A673 (cell line): ENCODE measurements at regions of chr1 and their contacts with region 1.

Region 1: DNA sequence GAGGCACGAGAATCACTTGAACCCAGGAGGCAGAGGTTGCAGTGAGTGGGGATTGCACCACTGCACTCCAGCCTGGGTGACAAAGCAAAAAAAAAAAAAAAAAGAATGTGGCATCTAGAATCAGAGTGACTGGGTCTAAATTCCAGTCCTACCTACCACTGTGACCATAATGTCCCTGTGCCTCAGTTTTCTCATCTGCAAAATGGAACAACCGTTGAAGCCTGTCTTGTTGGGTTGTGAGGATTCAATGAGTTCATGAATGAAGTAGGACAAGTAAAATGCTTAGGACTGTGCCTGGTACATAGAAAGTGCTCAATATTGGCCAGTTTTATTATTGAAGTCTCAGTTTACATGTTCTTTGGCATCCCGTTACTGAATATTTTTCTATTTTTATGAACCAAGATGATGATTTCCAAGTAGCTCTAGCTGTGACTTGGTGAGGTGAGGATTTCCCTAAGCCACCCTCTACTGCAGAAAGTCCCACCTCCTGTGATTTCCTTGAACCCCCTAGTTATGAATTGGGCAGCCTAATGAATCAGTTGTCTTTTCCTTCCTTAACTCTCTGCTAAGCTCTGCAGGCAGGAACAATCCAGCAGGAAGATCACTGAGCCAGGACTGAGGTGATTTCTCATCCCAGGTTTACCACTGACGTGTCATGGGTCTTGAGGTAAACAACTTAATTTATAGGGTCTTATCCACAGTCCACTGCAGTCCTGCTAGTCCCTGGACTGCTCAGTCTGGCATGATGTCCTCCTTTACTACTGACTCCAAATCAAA is 18.9 kb upstream of the MEAF6 start:
- DNase-seq: no peak
- H3K4me3 ChIP-seq: no peak overlapping the region
- H3K27ac ChIP-seq: no peak overlapping the region
- H3K4me1 ChIP-seq: no peaks in the 10 kb centered on the region
- H3K27me3 ChIP-seq: no peaks in the 10 kb centered on the region
- CTCF ChIP-seq: no peak

Region 2: DNA sequence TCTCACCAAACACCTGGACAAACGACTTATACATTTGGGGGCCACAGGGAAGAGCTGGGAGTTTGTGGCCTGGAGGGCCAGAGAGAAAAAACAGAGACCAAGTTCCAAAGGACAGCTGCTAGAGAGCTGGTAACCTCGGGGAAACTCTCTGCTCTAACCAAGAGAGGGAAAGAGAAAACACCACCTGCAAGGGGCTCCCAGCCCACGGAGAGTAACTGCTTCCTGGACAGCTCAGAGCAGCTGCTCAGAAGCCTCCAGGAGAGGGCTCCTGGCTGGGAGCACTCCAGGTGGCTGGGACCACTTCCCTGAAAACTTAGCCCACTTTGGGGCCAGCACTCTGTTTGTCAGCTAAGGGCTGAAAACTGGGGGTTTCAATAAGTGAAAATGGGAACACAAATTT is 344.4 kb before region 1 on chr1:
- CTCF ChIA-PET with region 1: no interaction called
- POLR2A ChIA-PET with region 1: no interaction called
- intact Hi-C with region 1: no loop called
- DNase-seq: no peak
- H3K4me3 ChIP-seq: no peak overlapping the region
- H3K27ac ChIP-seq: no peak overlapping the region
- H3K4me1 ChIP-seq: no peaks in the 10 kb centered on the region
- H3K27me3 ChIP-seq: peaks cover 13% of the 10 kb centered on the region
- CTCF ChIP-seq: no peak

Region 3: DNA sequence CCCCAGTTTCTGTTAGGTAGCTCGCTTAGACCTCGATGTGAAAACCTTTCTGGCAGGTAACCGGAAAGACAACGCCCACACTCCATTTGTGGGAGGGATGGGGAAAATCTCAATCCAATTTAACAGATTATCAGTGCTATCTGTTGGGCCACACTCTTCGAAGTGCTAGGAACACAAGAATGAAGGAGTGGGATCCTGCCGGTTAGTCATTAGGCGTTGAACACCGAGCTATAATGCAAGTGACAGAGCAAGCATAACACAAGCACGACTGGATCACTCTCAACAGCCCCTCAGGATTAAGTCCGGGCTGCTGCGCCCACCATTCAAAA is 20.1 kb after region 1 on chr1:
- CTCF ChIA-PET with region 1: no interaction called
- POLR2A ChIA-PET with region 1: interaction called, 11 read pairs
- intact Hi-C with region 1: no loop called
- DNase-seq: no peak
- H3K4me3 ChIP-seq: peak overlapping the region; percentile 94
- H3K27ac ChIP-seq: peak overlapping the region; percentile 88
- H3K4me1 ChIP-seq: peaks cover 9% of the 10 kb centered on the region
- H3K27me3 ChIP-seq: no peaks in the 10 kb centered on the region
- CTCF ChIP-seq: no peak